ENCODE measurements at regions of chr2 and their contacts with region 1.

Region 1: DNA sequence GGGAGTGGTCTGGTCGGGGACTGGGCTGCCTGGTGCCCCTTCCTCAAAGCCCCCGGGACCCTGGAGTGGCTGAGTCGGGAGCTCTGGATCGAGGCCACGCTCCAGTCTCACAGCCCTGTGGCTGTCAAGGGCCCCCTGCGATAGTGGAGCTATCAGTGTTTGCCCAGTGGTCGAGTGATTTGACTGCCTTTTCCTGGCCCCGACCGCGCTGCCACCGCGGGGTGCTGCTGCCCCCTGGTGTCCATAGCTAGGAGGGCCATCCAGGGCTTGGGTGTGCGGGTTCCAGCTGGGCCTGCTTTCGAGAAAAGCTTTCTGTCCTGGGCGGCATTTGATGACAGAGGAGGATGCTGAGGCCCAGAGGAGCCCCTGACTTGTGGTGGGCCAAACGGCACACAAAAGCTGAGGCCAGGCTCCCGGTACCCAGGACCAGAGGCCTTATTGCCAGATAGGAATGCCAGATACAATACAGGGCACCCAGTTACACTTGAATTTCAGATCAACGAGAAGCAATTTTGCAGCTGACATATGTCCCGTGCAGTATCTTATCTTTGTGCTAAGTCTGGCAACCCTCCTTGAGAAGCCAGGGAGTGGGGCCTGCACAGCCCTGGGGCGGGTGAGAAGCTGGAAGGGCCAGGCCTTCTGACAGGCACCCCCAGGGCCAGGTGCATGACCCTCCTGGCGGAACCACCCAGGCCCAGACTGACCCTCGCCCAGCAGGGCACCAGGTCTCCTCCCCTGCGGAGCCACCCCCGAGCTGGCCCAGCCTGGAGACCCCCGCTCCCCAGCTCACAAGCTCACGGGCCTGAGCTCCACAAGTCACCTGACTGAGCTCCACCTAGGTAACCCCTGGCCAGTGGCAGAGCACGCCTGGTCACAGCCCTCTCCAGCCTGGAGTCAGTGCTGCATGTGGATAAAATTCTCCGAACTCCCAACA is 13.0 kb downstream of the ODC1 start:
- DNase-seq: peak; percentile 33
- H3K4me3 ChIP-seq: no peak overlapping the region
- H3K27ac ChIP-seq: no peak overlapping the region
- H3K4me1 ChIP-seq: no peaks in the 10 kb centered on the region
- H3K27me3 ChIP-seq: no peaks in the 10 kb centered on the region
- CTCF ChIP-seq: peak; percentile 83 to 96 (median 94)
- POLR2A ChIP-seq: no peak

Region 2: GRCh38 chr2:9799665-9800632 is 635.2 kb before region 1 on chr2:
- intact Hi-C with region 1: loop called (anchors 10 kb)
- DNase-seq: peak; percentile 80
- H3K4me3 ChIP-seq: no peak overlapping the region
- H3K27ac ChIP-seq: peak overlapping the region in 1 of 2 donors; percentile 78
- H3K4me1 ChIP-seq: peaks cover 4% of the 10 kb centered on the region
- H3K27me3 ChIP-seq: no peaks in the 10 kb centered on the region
- CTCF ChIP-seq: peak; percentile 95 to 97 (median 96)
- POLR2A ChIP-seq: no peak

Region 3: DNA sequence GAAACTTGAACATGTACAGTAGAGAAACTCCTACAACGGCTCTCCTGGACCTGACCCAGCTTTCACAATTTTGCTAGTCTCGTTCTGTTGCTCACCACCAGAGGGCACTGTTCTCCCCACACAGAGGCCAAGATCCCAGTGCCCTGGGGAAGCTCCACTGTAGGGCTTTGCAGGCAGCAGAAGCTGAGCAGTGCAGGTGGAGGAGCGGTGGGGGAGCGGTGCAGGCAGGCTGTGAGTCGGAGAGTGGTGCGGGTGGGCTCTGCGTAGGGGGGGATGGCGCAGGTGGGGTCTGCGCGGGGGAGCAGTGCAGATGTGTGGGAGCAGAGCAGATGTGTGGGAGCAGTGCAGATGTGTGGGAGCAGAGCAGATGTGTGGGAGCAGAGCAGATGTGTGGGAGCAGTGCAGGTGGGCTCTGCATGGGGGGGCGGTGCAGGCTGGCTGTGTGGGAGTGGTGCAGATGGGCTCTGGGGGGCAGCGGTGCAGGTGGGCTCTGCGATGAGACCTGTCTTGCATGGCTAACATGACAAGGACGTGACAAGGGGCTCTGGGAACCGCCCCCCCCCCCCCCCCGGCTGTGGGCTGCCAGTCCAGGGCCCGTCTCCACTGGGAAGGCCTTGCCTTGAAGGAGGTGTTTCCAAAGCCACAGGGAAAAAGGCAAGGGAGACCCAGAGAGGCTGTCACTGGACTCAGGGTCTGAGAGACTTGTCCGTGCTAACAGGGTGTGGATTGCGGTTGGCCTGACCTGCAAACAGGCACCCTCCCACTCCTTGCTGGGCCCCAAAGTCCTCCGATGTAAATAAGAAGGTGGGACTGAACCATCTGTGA is 362.3 kb before region 1 on chr2:
- intact Hi-C with region 1: loop called (anchors 2 kb)
- DNase-seq: peak; percentile 77
- H3K4me3 ChIP-seq: no peak overlapping the region
- H3K27ac ChIP-seq: no peak overlapping the region
- H3K4me1 ChIP-seq: no peaks in the 10 kb centered on the region
- H3K27me3 ChIP-seq: no peaks in the 10 kb centered on the region
- CTCF ChIP-seq: peak; percentile 62 to 87 (median 83)
- POLR2A ChIP-seq: no peak

Region 4: DNA sequence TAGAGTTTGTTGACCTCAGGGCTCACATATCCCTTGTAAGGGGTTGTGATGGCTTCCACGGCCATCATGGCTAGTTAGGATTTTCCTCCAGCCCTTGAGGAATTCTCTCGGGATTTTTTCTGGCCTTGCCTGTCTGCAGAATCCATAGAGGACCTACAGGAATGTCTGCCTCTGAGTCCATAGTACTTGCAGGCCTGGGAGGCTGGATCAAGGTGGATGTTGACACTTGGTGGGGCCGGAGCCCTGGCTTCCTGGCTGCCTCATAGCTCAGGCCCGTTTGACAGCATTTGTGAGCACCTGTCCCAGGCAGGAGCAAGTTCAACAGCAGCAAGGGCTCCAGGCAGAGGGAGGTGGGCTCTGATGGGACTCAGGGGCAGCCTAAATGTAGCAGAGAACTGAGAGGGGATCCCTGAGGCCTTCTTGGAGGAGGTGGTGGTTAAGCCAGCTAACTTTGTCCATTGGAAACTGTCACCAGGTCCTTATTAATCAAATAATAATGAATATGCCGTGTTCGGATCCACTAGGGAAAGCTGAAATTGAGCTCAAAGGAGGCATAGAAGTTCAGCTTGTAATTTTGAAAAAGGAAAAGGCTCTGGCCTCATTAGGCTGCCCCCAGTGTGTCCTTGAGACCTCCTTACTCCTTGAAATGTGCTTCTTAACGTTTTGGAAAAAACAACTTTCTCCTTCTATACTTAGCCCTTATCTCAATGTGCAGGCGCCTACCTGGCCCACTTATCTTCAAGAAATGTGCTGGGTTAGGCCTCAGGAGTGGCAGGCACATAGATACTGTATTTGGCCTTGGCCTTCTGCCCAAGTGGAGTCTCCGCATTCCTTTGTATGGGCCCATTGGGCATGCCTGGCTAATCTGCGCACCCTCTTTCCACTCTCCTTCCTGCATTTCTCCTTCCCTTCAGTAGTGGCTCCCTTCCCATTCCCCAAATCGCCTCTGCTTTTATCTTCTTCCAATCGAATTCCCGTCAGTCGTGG is 65.6 kb before region 1 on chr2:
- intact Hi-C with region 1: no loop called
- DNase-seq: peak; percentile 35
- H3K4me3 ChIP-seq: no peak overlapping the region
- H3K27ac ChIP-seq: no peak overlapping the region
- H3K4me1 ChIP-seq: peaks cover 3% of the 10 kb centered on the region
- H3K27me3 ChIP-seq: no peaks in the 10 kb centered on the region
- CTCF ChIP-seq: no peak
- POLR2A ChIP-seq: no peak

Region 5: DNA sequence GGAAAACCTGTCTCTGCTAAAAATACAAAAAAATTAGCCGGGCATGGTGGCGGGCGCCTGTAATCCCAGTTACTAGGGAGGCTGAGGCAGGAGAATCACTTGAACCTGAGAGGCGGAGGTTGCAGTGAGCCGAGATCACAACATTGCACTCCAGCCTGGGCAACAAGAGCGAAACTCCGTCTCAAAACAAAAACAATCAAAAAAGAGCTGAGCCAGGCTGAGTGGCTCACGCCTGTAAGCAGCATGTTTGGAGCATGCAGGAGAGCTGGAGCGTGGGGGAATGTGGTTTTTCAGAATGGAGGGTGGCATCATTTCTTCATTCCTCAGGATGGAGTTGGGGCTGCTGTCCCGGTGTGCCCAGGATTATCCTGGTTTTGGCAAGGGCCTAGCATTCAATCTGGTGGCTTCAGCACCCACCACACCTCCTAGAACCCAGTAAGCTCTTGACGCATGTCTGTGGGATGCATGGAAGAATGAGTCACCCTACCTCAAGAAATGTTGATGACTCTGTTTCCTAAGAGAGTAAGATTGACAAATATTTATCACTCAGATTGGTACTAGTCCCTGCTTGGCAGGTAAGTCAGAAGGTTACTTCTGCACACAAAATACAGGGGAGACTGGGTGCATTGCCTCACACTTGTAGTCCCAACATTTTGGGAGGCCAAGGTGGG is 103.2 kb after region 1 on chr2:
- intact Hi-C with region 1: no loop called
- DNase-seq: no peak
- H3K4me3 ChIP-seq: no peak overlapping the region
- H3K27ac ChIP-seq: no peak overlapping the region
- H3K4me1 ChIP-seq: no peaks in the 10 kb centered on the region
- H3K27me3 ChIP-seq: no peaks in the 10 kb centered on the region
- CTCF ChIP-seq: no peak
- POLR2A ChIP-seq: no peak

Region 6: GRCh38 chr2:10678222-10678621 is 243.1 kb after region 1 on chr2:
- intact Hi-C with region 1: no loop called
- DNase-seq: no peak
- H3K4me3 ChIP-seq: no peak overlapping the region
- H3K27ac ChIP-seq: no peak overlapping the region
- H3K4me1 ChIP-seq: no peaks in the 10 kb centered on the region
- H3K27me3 ChIP-seq: no peaks in the 10 kb centered on the region
- CTCF ChIP-seq: peak in 1 of 4 experiments; percentile 27
- POLR2A ChIP-seq: no peak

Measured in prostate gland (tissue), 2 donors.